GM13977 (cell line): ENCODE measurements at regions of chr4 and their contacts with region 1.

Region 1: DNA sequence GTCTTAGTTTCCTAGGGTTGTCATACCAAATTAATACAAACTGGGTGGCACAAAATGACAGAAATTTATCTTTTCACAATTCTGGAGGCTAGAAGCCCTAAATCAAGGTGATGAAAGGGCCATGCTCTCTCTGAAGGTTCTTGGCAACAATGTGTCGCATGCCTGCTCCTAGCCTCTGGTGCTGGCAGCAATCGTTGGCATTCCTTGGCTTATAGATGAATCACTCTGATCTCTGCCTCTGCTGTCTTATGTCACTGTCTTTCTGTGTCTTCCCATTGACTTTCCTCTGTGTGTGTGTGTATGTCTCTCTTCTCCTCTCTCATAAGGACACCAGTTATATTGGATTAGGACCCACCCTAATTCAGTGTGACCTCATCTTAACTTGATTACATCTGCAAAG is 15.9 kb upstream of the INTU start:
- DNase-seq: no peak
- CTCF ChIP-seq: no peak

Region 2: GRCh38 chr4:126318376-126318775 is 1298.5 kb before region 1 on chr4:
- in situ Hi-C with region 1: no loop called
- DNase-seq: no peak
- CTCF ChIP-seq: no peak

Region 3: DNA sequence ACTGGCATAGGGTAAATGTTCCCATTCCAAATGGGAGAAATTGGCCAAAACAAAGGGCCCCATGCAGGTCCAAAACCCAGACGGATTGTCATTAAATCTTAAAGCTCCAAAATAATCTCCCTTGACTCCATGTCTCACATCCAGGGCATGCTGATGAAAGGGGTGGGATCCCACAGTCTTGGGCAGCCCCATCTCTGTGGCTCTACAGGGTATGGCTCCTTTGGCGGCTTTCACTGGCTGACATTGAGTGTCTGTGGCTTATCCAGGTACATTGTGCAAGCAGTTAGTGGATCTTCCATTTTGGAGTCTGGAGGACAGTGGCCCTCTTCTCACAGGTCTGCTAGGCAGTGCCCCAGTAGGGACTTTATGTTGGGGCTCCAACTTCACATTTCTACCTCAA is 757.0 kb before region 1 on chr4:
- in situ Hi-C with region 1: no loop called
- DNase-seq: no peak
- CTCF ChIP-seq: no peak

Region 4: GRCh38 chr4:127732613-127733328 is 115.9 kb after region 1 on chr4:
- in situ Hi-C with region 1: loop called (anchors 10 kb)
- DNase-seq: peak; percentile 77
- CTCF ChIP-seq: peak; percentile 55

Region 5: GRCh38 chr4:128600996-128601871 is 984.3 kb after region 1 on chr4:
- in situ Hi-C with region 1: no loop called
- DNase-seq: no peak
- CTCF ChIP-seq: no peak